MCF 10A (cell line): ENCODE measurements at regions of chr14 and their contacts with region 1.

Region 1: DNA sequence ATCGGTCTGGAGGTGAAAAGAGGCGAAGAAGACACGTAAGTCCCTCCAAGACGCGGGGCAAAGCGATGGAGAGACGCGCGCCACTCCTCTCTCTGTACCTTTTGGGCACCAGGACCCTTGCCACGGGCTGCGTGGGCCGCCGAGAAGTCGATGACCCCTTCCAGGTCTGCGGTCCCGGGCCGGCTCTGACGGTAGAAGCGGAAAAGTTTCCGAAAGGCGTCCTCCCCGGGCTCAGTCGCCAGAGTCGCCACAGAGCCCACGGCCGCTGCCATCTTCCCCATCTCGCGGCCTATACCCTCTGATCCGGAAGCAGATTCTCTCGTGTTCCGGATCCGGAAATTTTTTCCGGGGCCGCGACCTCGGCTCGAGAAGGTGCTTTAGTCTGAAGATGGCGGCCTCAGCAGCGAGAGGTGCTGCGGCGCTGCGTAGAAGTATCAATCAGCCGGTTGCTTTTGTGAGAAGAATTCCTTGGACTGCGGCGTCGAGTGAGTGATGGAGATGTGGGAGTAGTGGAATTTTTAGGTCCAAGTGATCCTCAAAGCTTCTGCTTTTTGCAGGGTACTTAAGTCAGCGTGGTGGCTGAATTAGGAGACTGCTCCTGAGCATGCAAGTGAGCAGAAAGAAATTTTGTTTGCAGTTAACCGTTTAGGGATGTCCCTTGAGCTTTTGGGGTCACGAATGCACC is at the starts of genes ALKBH1 and SLIRP:
- DNase-seq: peak; percentile 91
- H3K4me3 Mint-ChIP-seq: peak within 1 kb of the TSS; percentile 93
- H3K27ac Mint-ChIP-seq: peak within 1 kb of the TSS; percentile 95
- H3K4me1 Mint-ChIP-seq: peaks cover 20% of the 10 kb centered on the region
- H3K27me3 Mint-ChIP-seq: no peaks in the 10 kb centered on the region
- CTCF ChIP-seq: no peak
- total RNA-seq, gene ALKBH1: 14.4 and 19.0 TPM in 2 replicates
- total RNA-seq, gene SLIRP: 154 and 249 TPM in 2 replicates

Region 2: GRCh38 chr14:77616454-77617229 is 91.2 kb before region 1 on chr14 and contains the start of gene SPTLC2:
- CTCF ChIA-PET with region 1: interaction called, 5 read pairs
- POLR2A ChIA-PET with region 1: interaction called, 7 read pairs
- intact Hi-C with region 1: loop called (anchors 2 kb)
- DNase-seq: peak; percentile 99
- H3K4me3 Mint-ChIP-seq: peak within 1 kb of the TSS; percentile 89
- H3K27ac Mint-ChIP-seq: peak within 1 kb of the TSS; percentile 92
- H3K4me1 Mint-ChIP-seq: peaks cover 28% of the 10 kb centered on the region
- H3K27me3 Mint-ChIP-seq: no peaks in the 10 kb centered on the region
- CTCF ChIP-seq: no peak
- total RNA-seq, gene SPTLC2: 10.3 and 15.8 TPM in 2 replicates

Region 3: GRCh38 chr14:77654001-77654441 is 53.8 kb before region 1 on chr14:
- CTCF ChIA-PET with region 1: interaction called, 12 read pairs
- POLR2A ChIA-PET with region 1: no interaction called
- intact Hi-C with region 1: loop called (anchors 1 kb)
- DNase-seq: no peak
- H3K4me3 Mint-ChIP-seq: no peak overlapping the region
- H3K27ac Mint-ChIP-seq: no peak overlapping the region
- H3K4me1 Mint-ChIP-seq: no peaks in the 10 kb centered on the region
- H3K27me3 Mint-ChIP-seq: no peaks in the 10 kb centered on the region
- CTCF ChIP-seq: no peak

Region 4: GRCh38 chr14:77660754-77661153 is 47.1 kb before region 1 on chr14:
- CTCF ChIA-PET with region 1: interaction called, 13 read pairs
- POLR2A ChIA-PET with region 1: interaction called, 11 read pairs
- intact Hi-C with region 1: loop called (anchors 1 kb)
- DNase-seq: no peak
- H3K4me3 Mint-ChIP-seq: no peak overlapping the region
- H3K27ac Mint-ChIP-seq: no peak overlapping the region
- H3K4me1 Mint-ChIP-seq: peaks cover 11% of the 10 kb centered on the region
- H3K27me3 Mint-ChIP-seq: no peaks in the 10 kb centered on the region
- CTCF ChIP-seq: no peak

Region 5: DNA sequence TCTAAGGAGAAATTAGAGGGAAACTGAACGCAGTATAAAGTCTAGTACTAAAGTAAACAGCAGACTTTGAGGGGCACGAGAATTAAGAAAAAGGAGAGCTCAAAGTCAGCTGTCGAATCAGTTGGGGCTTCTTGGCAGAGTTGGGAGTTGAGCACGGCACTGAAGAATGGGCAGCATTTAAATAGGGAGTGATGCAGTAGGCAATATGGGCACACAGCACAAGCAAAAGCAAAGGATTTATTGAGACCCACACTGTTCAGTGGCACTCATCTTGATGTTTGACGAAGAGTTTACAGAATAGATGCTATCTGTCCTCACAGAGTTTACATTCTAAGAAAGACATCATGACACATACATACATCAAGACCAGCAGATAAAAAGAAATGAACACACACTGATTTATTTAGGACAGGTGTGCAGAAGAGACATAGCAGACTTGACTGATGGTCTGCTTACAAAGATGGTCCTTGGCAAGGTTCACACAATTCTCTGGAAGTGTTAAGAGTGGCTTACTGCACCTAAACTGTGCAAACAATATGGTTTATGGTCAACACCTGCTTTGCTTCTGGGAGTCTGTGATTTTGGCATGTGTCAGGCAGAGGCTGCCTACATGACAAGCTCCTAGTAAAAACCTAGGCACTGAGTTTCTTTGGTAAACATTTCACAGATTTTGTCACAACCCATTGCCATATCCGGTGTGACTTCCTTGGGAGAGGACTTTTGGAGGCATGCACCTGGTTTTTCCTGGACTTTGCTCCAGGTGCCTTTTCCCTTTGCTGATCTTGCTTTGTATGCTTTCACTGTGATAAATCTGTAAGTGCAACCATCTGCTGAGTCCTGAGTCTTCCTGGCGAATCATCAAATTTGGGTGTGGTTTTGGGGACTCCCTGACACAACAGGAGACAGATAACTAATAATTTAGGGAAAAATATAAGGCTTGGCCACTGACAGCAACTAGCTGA is 26.4 kb before region 1 on chr14:
- CTCF ChIA-PET with region 1: interaction called, 3 read pairs
- POLR2A ChIA-PET with region 1: interaction called, 18 read pairs
- intact Hi-C with region 1: no loop called
- DNase-seq: peak; percentile 30
- H3K4me3 Mint-ChIP-seq: no peak overlapping the region
- H3K27ac Mint-ChIP-seq: peak overlapping the region; percentile 55
- H3K4me1 Mint-ChIP-seq: peaks cover 22% of the 10 kb centered on the region
- H3K27me3 Mint-ChIP-seq: no peaks in the 10 kb centered on the region
- CTCF ChIP-seq: no peak

Region 6: DNA sequence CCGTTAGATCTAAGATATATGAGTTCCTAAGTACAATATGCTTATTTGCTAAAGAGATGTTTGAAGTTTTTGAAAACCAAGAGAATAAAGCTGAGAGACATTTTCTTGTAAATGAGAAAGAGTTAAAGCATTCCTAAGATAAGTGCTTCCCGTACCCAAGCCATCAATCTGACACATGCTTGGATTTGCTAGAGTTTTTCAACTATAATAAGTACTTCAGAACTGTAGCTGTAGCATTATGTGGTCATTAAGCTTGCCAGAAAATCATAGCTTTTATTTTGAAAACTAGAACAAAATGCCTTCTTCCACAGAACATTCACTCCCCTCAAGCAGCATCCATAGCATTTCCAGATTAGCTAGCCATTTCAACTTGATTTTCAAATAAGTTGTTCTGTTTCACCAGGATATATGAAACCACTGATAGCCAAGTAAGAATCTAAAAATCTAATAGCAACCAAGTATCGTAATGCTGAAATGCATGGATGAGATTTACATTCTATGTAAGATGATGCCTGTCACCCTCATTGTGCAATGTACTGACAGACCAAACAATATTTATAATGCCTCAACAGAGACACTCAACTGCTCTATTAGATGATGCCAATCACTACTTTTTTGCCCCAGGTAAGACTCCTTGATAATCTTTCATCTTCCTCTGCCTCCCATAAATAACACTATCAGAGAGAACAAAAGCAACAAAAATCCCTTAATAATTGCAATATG is 45.1 kb after region 1 on chr14:
- CTCF ChIA-PET with region 1: interaction called, 3 read pairs
- POLR2A ChIA-PET with region 1: interaction called, 15 read pairs
- intact Hi-C with region 1: no loop called
- DNase-seq: no peak
- H3K4me3 Mint-ChIP-seq: no peak overlapping the region
- H3K27ac Mint-ChIP-seq: no peak overlapping the region
- H3K4me1 Mint-ChIP-seq: peaks cover 6% of the 10 kb centered on the region
- H3K27me3 Mint-ChIP-seq: no peaks in the 10 kb centered on the region
- CTCF ChIP-seq: no peak

Region 7: DNA sequence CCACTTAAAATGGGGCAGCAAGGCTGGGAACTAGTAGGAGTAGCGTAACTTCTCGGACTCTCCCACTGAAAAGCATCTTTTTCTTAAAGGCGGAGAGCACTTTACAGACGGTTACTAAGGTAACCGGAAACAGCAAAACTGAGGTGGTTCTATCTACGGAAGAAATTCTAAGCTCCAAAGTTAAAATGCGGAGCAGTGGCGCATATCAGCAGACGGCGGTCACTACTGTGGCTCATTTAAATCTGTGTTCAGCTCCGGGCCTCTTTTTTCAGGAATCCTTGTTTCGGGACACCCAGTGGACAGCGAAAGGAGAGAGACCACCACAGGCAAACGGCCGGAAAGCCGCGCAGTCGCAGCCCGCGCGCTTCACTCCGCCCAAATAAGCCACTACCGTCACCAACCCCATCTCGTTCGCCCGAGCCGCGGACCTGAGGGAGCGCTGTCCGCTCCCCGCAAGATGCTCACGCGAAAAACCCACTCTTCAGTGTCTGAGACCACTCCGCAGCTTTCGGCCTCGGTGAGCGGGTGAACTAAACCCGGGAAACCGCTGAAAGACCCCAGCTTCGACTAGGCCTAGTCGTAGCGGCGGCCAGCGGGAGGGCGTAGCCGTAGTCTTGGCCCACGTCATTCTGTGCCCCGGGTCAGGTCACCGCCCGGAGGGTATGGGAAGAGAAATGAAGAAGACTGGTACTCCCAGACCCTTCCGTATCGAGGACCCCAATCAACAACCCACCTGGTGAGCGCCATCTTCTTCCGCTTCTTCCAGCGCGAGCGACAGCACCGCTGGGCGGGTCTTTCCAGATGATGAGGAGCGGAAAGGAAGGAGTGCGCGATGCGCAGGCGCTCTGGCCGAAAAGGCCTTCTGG is 52.7 kb after region 1 on chr14 and contains the start of gene SNW1:
- CTCF ChIA-PET with region 1: interaction called, 5 read pairs
- POLR2A ChIA-PET with region 1: interaction called, 27 read pairs
- intact Hi-C with region 1: no loop called
- DNase-seq: peak; percentile 93
- H3K4me3 Mint-ChIP-seq: peak within 1 kb of the TSS; percentile 89
- H3K27ac Mint-ChIP-seq: peak within 1 kb of the TSS; percentile 96
- H3K4me1 Mint-ChIP-seq: peaks cover 14% of the 10 kb centered on the region
- H3K27me3 Mint-ChIP-seq: no peaks in the 10 kb centered on the region
- CTCF ChIP-seq: no peak
- total RNA-seq, gene SNW1: 113 and 122 TPM in 2 replicates